ENCODE measurements at regions of chr2 and their contacts with region 1.

Region 1: DNA sequence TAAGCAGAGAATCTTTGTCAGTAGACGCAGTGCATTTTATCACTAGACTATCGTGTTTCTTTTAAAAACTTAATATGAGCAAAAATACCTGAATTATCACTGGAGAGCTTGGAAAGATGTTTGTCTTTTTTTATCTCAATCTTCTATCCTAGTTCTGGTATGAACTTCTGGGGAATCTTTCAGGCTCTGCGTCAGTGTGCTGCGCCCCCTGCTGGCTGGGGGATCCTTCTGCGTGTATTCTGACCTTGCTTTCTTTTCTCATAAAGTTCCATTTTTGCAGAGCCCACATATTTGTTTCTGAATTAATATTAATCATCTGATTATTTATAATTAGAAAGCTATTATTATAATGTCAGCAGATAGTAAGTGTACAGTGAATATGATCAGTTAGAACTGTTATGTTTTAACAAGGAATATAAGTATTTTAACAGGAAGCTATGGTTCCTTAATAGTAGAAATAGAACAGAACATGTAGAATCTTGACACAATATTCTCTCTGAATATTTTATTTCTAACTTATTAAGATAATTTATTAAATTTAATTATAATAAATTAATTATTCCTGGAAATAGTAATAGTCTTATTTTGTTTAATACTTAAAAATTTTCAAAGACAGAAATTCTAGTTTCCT is 945.0 kb upstream of the CRIM1 start:
- DNase-seq: peak; percentile 70
- ATAC-seq: no peak
- H3K4me3 Mint-ChIP-seq: no peak overlapping the region
- H3K27ac Mint-ChIP-seq: no peak overlapping the region
- H3K4me1 Mint-ChIP-seq: no peaks in the 10 kb centered on the region
- H3K27me3 Mint-ChIP-seq: peaks cover 2% of the 10 kb centered on the region

Region 2: DNA sequence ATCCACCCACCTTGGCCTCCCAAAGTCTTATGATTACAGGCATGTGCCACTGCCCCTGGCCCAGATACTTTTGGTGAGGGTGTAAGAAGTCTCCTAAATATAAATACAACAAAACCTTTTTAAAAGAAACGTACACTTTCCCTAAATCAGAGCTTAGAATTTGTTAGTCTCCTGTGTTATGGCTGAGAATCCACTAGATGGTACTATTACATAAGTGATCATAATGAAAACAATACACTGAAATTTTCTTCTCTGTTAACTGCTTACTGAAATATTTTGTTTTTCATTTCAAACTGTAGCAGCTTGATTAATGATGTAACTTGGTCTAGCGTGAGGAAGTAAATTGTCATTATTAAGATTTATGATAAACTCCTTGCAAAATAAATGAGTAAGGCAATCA is 1736.6 kb before region 1 on chr2:
- CTCF ChIA-PET with region 1: no interaction called
- POLR2A ChIA-PET with region 1: no interaction called
- intact Hi-C with region 1: loop called in 1 of 2 experiments (anchors 5 kb)
- DNase-seq: no peak
- ATAC-seq: no peak
- H3K4me3 Mint-ChIP-seq: no peak overlapping the region
- H3K27ac Mint-ChIP-seq: no peak overlapping the region
- H3K4me1 Mint-ChIP-seq: no peaks in the 10 kb centered on the region
- H3K27me3 Mint-ChIP-seq: no peaks in the 10 kb centered on the region

Region 3: DNA sequence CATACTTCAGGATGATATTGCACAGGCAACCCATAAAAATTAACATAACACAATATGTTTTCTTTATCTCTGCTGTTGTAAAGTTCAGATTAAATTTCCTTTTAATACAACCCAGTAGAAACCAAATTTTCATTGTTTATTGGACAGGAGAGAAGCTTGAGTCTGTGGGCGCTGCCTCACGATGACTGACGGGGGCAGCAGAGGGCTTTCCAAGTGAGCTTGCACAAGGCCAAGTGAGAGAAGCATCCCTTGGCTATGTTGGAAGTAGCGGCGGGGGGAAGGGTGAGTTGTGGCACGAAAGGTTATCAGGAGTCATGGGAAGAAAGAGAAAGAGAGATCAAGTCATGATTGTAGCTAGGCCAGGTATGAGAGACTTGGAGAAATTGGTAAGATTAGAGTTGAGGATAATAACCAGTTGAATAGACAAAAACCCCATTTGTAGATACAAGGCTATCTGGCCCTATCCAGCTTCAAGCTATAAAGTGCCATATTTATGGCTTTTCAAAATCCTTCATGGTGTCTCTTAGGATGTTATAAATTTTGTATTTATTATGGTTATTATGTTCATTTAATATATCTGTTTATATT is 1397.7 kb before region 1 on chr2:
- CTCF ChIA-PET with region 1: interaction called, 3 read pairs
- POLR2A ChIA-PET with region 1: no interaction called
- intact Hi-C with region 1: loop called in 1 of 2 experiments (anchors 2 kb)
- DNase-seq: peak; percentile 61
- ATAC-seq: no peak
- H3K4me3 Mint-ChIP-seq: no peak overlapping the region
- H3K27ac Mint-ChIP-seq: no peak overlapping the region
- H3K4me1 Mint-ChIP-seq: no peaks in the 10 kb centered on the region
- H3K27me3 Mint-ChIP-seq: peaks cover 2% of the 10 kb centered on the region

Region 4: GRCh38 chr2:34096562-34097171 is 1313.9 kb before region 1 on chr2:
- CTCF ChIA-PET with region 1: interaction called, 9 read pairs
- POLR2A ChIA-PET with region 1: no interaction called
- intact Hi-C with region 1: loop called (anchors 1 to 2 kb)
- DNase-seq: peak; percentile 67
- ATAC-seq: peak; percentile 39
- H3K4me3 Mint-ChIP-seq: no peak overlapping the region
- H3K27ac Mint-ChIP-seq: no peak overlapping the region
- H3K4me1 Mint-ChIP-seq: no peaks in the 10 kb centered on the region
- H3K27me3 Mint-ChIP-seq: no peaks in the 10 kb centered on the region

Region 5: GRCh38 chr2:35168354-35168753 is 242.2 kb before region 1 on chr2:
- CTCF ChIA-PET with region 1: interaction called, 4 read pairs
- POLR2A ChIA-PET with region 1: no interaction called
- intact Hi-C with region 1: loop called in 1 of 2 experiments (anchors 5 kb)
- DNase-seq: no peak
- ATAC-seq: no peak
- H3K4me3 Mint-ChIP-seq: no peak overlapping the region
- H3K27ac Mint-ChIP-seq: no peak overlapping the region
- H3K4me1 Mint-ChIP-seq: no peaks in the 10 kb centered on the region
- H3K27me3 Mint-ChIP-seq: no peaks in the 10 kb centered on the region

Region 6: GRCh38 chr2:35960596-35960995 is 550.0 kb after region 1 on chr2:
- CTCF ChIA-PET with region 1: no interaction called
- POLR2A ChIA-PET with region 1: no interaction called
- intact Hi-C with region 1: no loop called
- DNase-seq: no peak
- ATAC-seq: no peak
- H3K4me3 Mint-ChIP-seq: no peak overlapping the region
- H3K27ac Mint-ChIP-seq: no peak overlapping the region
- H3K4me1 Mint-ChIP-seq: no peaks in the 10 kb centered on the region
- H3K27me3 Mint-ChIP-seq: no peaks in the 10 kb centered on the region

Measured in activated CD4-positive, alpha-beta T cell treated with anti-CD3 and anti-CD28 coated beads for 36 hours (primary cell).